ENCODE measurements at regions of chr5 and their contacts with region 1.

Region 1: DNA sequence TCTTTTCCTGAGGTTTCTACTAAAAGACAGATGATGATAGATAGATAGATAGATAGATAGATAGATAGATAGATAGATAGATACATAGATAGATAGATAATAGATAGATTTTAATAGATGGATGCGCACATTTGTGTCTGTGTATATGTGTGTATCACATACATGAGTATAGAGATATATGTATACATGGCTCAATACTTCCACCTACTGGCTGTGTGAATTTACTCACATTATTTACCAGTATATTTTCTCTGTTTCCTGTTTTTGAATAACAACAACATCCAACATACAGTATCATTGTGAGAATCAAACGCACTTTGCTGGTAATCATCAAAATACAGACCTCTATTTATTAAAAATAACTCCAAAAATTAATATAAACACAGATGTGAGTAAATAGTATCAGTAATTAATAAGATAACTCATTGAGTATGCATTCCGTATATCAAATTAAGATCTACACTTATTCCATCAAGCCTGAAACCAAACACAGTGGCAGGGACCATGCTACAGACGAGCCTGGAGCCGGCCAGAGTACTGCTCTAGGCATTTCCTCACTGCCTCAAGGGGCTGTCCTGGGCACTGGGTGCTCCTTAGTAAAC is 338.0 kb downstream of the SEMA5A start:
- DNase-seq: no peak
- H3K4me3 ChIP-seq: no peak overlapping the region
- CTCF ChIP-seq: peak; percentile 25

Region 2: DNA sequence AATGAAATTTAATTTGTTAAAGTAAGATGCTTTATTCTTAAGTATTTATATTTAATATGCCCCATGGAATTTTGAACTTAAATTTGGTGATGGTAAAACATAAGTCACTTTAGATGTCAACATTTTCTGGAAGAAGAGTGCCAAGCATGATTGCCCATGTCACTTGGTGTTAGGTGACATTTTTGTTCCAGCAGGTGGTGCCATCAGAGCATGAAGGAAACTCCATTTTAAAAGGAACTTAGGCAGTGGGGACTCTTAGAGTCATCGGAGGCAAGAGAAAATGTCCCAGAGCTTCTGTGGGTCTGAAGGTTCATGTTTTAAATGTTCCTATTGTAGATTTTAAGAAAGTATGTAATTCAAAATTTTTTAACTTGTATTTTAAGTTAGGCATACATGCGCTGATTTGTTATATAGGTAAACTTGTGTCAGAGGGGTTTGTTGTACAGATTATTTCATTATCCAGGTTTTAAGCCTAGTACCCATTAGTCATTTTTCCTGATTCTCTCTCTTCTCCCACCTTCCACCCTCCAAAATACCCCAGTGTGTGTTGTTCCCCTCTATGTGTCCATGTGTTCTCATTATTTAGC is 451.3 kb before region 1 on chr5:
- CTCF ChIA-PET with region 1: interaction called, 28 read pairs
- POLR2A ChIA-PET with region 1: no interaction called
- DNase-seq: no peak
- H3K4me3 ChIP-seq: no peak overlapping the region
- CTCF ChIP-seq: peak; percentile 57

Region 3: GRCh38 chr5:9544502-9545135 is 336.7 kb after region 1 on chr5:
- CTCF ChIA-PET with region 1: interaction called, 24 read pairs
- POLR2A ChIA-PET with region 1: no interaction called
- DNase-seq: no peak
- H3K4me3 ChIP-seq: peak overlapping the region; percentile 93
- CTCF ChIP-seq: peak; percentile 92